ENCODE measurements at regions of chr6 and their contacts with region 1.

Region 1: GRCh38 chr6:38493931-38494547 is 145.7 kb downstream of the BTBD9 start:
- DNase-seq: peak in 1 of 2 experiments; percentile 67
- ATAC-seq: peak in 1 of 2 experiments; percentile 57; a peak in 1 of 6 replicates
- H3K4me3 ChIP-seq: no peak overlapping the region
- H3K27ac ChIP-seq: no peak overlapping the region
- H3K4me1 ChIP-seq: no peaks in the 10 kb centered on the region
- CTCF ChIP-seq: peak; percentile 91
- EP300 ChIP-seq: no peak
- POLR2A ChIP-seq: no peak
- RAD21 ChIP-seq: peak; percentile 90 to 94

Region 2: DNA sequence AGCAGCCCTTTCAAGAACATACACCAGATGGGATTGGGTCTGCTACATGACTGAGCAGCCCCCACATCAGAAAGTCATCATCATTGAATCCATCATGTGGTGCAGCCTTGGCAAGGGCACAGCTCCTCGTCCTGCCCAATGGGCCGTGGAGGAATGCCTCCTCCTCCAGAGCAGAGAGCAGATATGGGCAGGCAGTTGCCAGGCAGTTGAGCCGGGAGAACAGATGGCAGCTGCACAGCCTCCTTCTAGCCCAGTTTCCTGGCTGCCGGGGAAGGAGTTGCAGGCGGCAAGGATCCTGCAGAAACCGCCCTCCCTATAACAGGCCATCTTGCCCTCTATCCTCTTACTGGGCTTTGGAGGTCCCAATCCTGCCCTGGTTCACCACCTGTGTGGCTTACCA is 686.4 kb before region 1 on chr6:
- CTCF ChIA-PET with region 1: no interaction called
- POLR2A ChIA-PET with region 1: no interaction called
- DNase-seq: no peak
- ATAC-seq: peak; percentile 54 to 58; a peak in 4 of 6 replicates
- H3K4me3 ChIP-seq: no peak overlapping the region
- H3K27ac ChIP-seq: no peak overlapping the region
- H3K4me1 ChIP-seq: no peaks in the 10 kb centered on the region
- CTCF ChIP-seq: no peak
- EP300 ChIP-seq: no peak
- POLR2A ChIP-seq: no peak
- RAD21 ChIP-seq: no peak

Region 3: GRCh38 chr6:38477680-38478260 is 16.3 kb before region 1 on chr6:
- CTCF ChIA-PET with region 1: interaction called, 10 read pairs
- POLR2A ChIA-PET with region 1: no interaction called
- DNase-seq: no peak
- ATAC-seq: no peak
- H3K4me3 ChIP-seq: no peak overlapping the region
- H3K27ac ChIP-seq: no peak overlapping the region
- H3K4me1 ChIP-seq: no peaks in the 10 kb centered on the region
- CTCF ChIP-seq: no peak
- EP300 ChIP-seq: no peak
- POLR2A ChIP-seq: no peak
- RAD21 ChIP-seq: no peak

Region 4: DNA sequence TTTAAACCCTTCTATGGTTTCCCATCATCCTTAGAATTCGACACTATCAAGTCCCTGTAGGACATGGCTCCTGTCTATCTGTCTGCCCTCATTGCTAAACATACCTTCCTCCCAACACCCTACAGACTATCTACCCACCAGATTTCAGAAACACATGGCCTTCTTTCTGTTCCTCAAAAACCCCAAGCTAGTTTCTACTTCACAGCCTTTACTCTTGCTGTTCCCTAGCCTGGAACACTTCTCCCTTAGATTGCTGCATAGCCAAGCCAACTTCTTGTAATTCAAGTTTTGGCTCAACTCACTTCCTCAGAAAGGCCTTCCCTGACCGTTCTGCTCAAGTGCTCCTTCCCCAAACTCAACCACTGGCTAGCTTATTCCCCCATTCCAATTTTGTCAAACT is 10.5 kb before region 1 on chr6:
- CTCF ChIA-PET with region 1: interaction called, 16 read pairs
- POLR2A ChIA-PET with region 1: no interaction called
- DNase-seq: no peak
- ATAC-seq: no peak
- H3K4me3 ChIP-seq: no peak overlapping the region
- H3K27ac ChIP-seq: no peak overlapping the region
- H3K4me1 ChIP-seq: no peaks in the 10 kb centered on the region
- CTCF ChIP-seq: no peak
- EP300 ChIP-seq: no peak
- POLR2A ChIP-seq: no peak
- RAD21 ChIP-seq: no peak

Measured in A549 (cell line).